PC-9 (cell line): ENCODE measurements at regions of chr14 and their contacts with region 1.

Region 1: DNA sequence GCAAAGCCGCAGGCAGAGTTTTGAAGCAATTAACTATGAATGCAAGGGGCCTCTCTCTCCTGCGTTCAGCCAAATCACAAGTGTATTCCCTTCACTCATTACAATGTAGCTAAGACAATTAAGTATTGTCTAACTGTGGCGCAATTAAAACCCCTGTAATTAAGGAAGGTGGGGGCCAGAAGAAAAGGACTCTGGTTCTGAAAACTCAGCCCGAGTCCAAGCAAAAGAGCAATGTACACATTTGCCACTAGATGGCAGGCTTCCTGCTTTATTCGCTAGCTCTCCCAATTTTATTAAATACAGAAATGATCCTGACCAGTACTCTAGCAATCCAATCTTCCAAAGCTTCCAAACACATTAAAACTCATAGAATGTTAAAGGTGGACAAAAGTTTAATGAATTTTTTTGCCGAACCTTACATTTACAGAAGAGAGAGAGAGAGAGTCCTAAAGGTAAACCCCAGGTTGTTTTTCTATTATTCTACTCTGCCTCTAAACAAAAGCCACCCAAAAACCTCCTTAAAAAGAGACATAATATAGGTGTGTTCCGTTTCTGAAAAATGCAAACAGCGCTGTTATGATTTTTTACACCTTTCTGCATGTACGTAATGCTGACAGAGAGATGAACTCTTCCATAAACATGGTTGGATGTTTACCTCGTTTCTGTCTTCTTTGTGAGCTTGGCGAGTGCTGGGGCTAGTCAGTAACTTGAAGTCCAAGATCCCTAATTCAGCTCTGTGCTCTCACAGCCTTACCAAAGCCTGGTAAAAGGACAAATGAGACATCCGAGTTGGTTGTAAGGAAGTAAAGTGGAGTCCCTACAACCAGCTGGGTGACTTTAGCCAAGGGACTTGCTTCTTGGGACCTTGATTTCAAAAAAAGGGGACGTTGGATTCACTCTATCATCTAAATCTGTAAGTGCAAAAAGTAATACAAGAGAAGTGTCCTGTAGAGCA is 50.9 kb upstream of the VASH1 start:
- DNase-seq: peak in 1 of 2 experiments; percentile 35
- H3K4me3 ChIP-seq: no peak overlapping the region
- H3K27ac ChIP-seq: no peak overlapping the region
- H3K4me1 ChIP-seq: no peaks in the 10 kb centered on the region
- H3K27me3 ChIP-seq: peaks cover 93% of the 10 kb centered on the region
- CTCF ChIP-seq: peak; percentile 96

Region 2: GRCh38 chr14:76591266-76591665 is 119.1 kb before region 1 on chr14:
- CTCF ChIA-PET with region 1: interaction called, 11 read pairs
- POLR2A ChIA-PET with region 1: no interaction called
- intact Hi-C with region 1: no loop called
- DNase-seq: no peak
- H3K4me3 ChIP-seq: no peak overlapping the region
- H3K27ac ChIP-seq: no peak overlapping the region
- H3K4me1 ChIP-seq: no peaks in the 10 kb centered on the region
- H3K27me3 ChIP-seq: peaks cover 86% of the 10 kb centered on the region
- CTCF ChIP-seq: no peak

Region 3: GRCh38 chr14:76603713-76604112 is 106.6 kb before region 1 on chr14:
- CTCF ChIA-PET with region 1: no interaction called
- POLR2A ChIA-PET with region 1: no interaction called
- intact Hi-C with region 1: no loop called
- DNase-seq: no peak
- H3K4me3 ChIP-seq: no peak overlapping the region
- H3K27ac ChIP-seq: no peak overlapping the region
- H3K4me1 ChIP-seq: no peaks in the 10 kb centered on the region
- H3K27me3 ChIP-seq: peaks cover 93% of the 10 kb centered on the region
- CTCF ChIP-seq: no peak

Region 4: GRCh38 chr14:76640923-76641395 is 69.4 kb before region 1 on chr14:
- CTCF ChIA-PET with region 1: interaction called, 11 read pairs
- POLR2A ChIA-PET with region 1: no interaction called
- intact Hi-C with region 1: no loop called
- DNase-seq: no peak
- H3K4me3 ChIP-seq: no peak overlapping the region
- H3K27ac ChIP-seq: no peak overlapping the region
- H3K4me1 ChIP-seq: no peaks in the 10 kb centered on the region
- H3K27me3 ChIP-seq: peaks cover 99% of the 10 kb centered on the region
- CTCF ChIP-seq: no peak

Region 5: DNA sequence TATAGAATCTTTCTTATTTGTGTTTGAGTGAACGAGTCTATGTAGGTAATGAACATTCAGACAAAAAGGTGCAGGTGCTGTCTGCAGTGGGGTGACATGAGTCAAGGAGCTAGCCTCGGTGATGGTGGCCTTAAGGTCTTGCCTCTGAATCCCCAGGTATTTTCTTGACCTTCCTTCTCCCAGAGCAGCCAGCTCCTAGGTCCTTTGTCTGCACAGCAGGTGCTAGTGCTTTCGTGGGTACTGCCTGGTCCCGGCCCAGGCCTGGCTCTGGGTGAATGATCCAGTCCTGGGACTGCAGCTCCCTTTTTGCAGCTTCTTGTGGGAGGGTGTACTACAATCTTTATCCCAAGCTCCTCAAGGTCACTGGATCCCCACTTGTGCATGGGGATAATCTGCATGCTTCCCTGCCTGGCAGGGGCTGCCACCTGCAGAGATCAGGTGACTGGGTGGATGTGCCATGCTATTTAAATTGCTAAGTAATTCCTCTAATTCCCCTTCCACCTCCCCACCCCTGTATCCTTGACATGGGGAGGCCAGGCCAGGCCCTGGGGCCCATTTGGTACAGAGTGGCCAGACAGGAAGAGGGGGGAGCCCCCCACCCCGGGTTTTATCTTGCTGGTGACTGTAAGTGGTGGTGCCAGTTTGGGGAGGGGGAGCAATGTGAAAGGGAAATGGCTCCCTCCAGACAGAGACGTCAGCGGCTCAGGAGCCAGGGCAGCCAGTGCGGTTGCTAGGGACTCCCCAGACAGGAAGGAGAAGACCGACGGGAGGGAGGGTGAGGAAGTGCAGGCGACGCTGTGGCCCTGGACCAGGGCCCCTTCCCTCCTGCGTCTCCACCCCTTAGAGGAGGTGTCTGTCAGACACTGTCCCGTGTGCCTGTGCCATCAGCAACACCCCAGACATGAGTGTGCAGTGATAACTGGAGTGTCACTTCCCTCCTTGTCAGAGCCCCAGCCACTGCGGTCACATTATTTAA is 57.6 kb after region 1 on chr14:
- CTCF ChIA-PET with region 1: interaction called, 13 read pairs
- POLR2A ChIA-PET with region 1: no interaction called
- intact Hi-C with region 1: no loop called
- DNase-seq: peak in 1 of 2 experiments; percentile 0
- H3K4me3 ChIP-seq: no peak overlapping the region
- H3K27ac ChIP-seq: no peak overlapping the region
- H3K4me1 ChIP-seq: peaks cover 5% of the 10 kb centered on the region
- H3K27me3 ChIP-seq: peaks cover 91% of the 10 kb centered on the region
- CTCF ChIP-seq: no peak

Region 6: GRCh38 chr14:76773188-76773885 is 63.0 kb after region 1 on chr14:
- CTCF ChIA-PET with region 1: interaction called, 12 read pairs
- POLR2A ChIA-PET with region 1: no interaction called
- intact Hi-C with region 1: no loop called
- DNase-seq: peak; percentile 84 to 96
- H3K4me3 ChIP-seq: no peak overlapping the region
- H3K27ac ChIP-seq: no peak overlapping the region
- H3K4me1 ChIP-seq: peaks cover 17% of the 10 kb centered on the region
- H3K27me3 ChIP-seq: peaks cover 40% of the 10 kb centered on the region
- CTCF ChIP-seq: no peak

Region 7: GRCh38 chr14:76784266-76785264 is 74.2 kb after region 1 on chr14:
- CTCF ChIA-PET with region 1: interaction called, 28 read pairs
- POLR2A ChIA-PET with region 1: interaction called, 6 read pairs
- intact Hi-C with region 1: loop called (anchors 1 kb)
- DNase-seq: peak; percentile 65 to 80
- H3K4me3 ChIP-seq: no peak overlapping the region
- H3K27ac ChIP-seq: no peak overlapping the region
- H3K4me1 ChIP-seq: no peaks in the 10 kb centered on the region
- H3K27me3 ChIP-seq: no peaks in the 10 kb centered on the region
- CTCF ChIP-seq: peak; percentile 83

Region 8: DNA sequence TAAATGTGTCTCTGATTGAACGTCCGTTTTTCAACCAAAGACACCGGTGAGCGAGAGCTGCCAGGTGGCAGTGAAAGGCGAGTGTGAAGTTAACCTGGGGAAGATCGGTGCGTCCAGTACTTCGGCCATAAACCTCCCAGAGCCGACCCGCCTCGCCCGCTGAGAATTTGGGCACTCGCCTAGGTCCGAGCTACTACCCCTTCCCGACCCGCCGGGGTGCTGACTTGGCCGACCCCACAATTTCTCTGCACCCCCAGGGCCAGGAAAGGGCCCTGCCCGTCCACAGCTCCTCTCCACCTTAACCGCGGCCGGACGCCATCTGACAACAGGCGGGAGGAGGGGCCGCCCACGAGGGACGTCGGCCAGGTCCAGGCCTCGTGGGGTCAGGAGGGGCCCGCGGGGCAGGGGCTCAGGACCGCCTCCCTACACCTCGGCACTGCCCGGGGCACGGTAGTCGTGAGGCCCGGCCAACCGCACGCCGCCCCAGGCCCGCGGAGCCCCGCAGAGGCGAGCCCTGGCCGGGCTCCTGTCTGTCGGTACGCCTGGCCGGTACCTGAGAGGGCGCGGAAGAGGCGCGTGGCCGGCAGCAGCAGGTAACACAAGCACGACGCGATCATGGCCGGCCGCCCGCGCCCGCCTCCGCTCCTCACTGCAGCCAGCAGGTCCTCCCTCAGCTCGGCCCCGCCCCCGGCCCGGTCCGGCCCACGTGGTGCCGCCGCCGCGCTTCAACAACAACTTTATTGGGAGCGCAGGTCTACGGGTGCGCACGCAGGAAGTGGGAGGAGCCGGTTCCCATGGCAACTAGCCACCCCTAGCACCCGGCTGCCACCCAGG is 102.1 kb after region 1 on chr14 and contains the start of gene ANGEL1:
- CTCF ChIA-PET with region 1: interaction called, 4 read pairs
- POLR2A ChIA-PET with region 1: no interaction called
- intact Hi-C with region 1: loop called (anchors 1 kb)
- DNase-seq: peak; percentile 85 to 100
- H3K4me3 ChIP-seq: peak within 1 kb of the TSS; percentile 74
- H3K27ac ChIP-seq: no peak within 1 kb of the TSS
- H3K4me1 ChIP-seq: peaks cover 14% of the 10 kb centered on the region
- H3K27me3 ChIP-seq: peaks cover 17% of the 10 kb centered on the region
- CTCF ChIP-seq: no peak
- total RNA-seq, gene ANGEL1: 31.7 and 44.0 TPM in 2 replicates

Region 9: DNA sequence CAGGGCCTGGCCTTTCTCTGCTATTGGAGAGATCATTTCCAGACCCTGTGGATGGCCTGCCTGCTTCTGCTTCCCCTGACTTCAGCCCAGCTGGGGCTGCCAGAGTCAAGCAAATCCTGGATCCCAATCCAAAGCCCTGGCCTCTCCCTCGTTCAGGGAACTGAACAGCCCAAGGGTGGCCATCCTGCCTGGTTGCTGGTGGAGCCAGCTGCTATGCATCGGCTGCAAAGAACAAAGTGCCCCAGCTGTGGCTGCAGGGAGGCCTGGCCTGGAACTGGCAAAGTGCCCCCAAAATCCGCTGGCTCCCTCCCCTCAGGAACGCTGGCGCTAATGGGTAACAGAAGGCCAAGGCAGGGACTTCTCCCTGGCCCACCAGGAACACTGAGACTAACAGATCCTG is 172.3 kb after region 1 on chr14:
- CTCF ChIA-PET with region 1: no interaction called
- POLR2A ChIA-PET with region 1: no interaction called
- intact Hi-C with region 1: no loop called
- DNase-seq: no peak
- H3K4me3 ChIP-seq: no peak overlapping the region
- H3K27ac ChIP-seq: no peak overlapping the region
- H3K4me1 ChIP-seq: no peaks in the 10 kb centered on the region
- H3K27me3 ChIP-seq: no peaks in the 10 kb centered on the region
- CTCF ChIP-seq: no peak